Activated CD4-positive, alpha-beta T cell treated with anti-CD3 and anti-CD28 coated beads for 36 hours (primary cell): ENCODE measurements at regions of chr5 and their contacts with region 1.

Region 1: DNA sequence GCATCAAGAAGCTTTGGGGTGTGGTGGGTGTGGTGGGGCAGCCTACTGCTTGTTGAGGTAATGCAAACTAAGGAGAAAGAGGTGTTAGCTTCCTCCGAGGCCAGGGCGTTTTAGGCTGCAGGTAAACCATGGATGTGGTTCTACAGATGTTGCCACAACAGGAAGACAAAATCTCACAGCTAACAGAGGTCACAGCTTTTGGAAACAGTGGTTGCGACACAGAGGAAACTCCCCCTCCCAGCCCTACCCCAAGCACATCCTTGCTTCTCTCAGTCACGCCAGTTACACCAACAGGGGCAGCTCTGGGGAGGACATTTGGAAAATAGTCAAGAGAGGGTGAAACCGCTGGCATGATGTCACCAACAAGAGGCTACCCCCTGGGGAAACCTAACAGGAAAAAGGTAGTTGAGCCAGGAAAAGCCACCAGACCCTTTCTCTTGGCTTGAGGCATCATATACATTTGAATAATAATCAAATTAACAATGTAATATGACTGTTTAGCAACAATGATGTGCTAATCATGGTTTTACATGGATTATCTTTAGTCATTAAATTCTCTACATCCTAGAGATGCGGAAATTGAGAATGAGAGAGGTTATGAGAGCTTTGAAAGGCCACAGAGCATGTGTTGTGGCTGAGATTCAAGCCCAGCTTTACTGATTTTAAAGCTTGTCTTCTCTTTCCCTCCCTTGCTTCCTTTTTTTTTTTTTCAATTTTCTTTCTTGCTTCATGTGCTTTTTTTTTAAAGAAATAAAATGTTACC is 82.2 kb upstream of the IL12B start:
- DNase-seq: peak; percentile 75
- ATAC-seq: peak; percentile 82
- H3K4me3 Mint-ChIP-seq: no peak overlapping the region
- H3K27ac Mint-ChIP-seq: no peak overlapping the region
- H3K4me1 Mint-ChIP-seq: peaks cover 47% of the 10 kb centered on the region
- H3K27me3 Mint-ChIP-seq: peaks cover 6% of the 10 kb centered on the region

Region 2: DNA sequence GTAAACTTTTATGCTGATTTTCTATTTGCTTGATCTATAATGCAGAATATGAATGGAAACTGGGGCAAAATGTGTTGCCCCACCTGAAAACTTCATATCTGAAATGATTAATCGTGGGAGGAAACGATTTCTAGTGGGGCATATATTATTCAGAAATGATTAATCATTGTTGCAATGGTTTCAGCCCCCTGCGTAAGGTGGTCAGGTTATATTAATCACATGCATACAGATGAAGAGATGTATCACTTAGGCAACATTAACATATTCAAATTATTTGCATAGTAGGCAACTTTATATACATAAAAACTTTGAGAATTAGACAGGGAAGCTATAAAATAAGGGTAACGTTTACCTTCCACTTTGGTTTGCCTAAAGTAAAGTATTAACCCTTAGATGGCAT is 1619.2 kb before region 1 on chr5:
- CTCF ChIA-PET with region 1: no interaction called
- POLR2A ChIA-PET with region 1: interaction called, 15 read pairs
- intact Hi-C with region 1: no loop called
- DNase-seq: no peak
- ATAC-seq: peak; percentile 69
- H3K4me3 Mint-ChIP-seq: no peak overlapping the region
- H3K27ac Mint-ChIP-seq: no peak overlapping the region
- H3K4me1 Mint-ChIP-seq: peaks cover 9% of the 10 kb centered on the region
- H3K27me3 Mint-ChIP-seq: no peaks in the 10 kb centered on the region

Region 3: GRCh38 chr5:159163027-159163700 is 249.3 kb before region 1 on chr5:
- CTCF ChIA-PET with region 1: no interaction called
- POLR2A ChIA-PET with region 1: no interaction called
- intact Hi-C with region 1: loop called (anchors 5 to 10 kb)
- DNase-seq: peak; percentile 38
- ATAC-seq: peak; percentile 96
- H3K4me3 Mint-ChIP-seq: no peak overlapping the region
- H3K27ac Mint-ChIP-seq: peak overlapping the region; percentile 82
- H3K4me1 Mint-ChIP-seq: peaks cover 48% of the 10 kb centered on the region
- H3K27me3 Mint-ChIP-seq: no peaks in the 10 kb centered on the region

Region 4: DNA sequence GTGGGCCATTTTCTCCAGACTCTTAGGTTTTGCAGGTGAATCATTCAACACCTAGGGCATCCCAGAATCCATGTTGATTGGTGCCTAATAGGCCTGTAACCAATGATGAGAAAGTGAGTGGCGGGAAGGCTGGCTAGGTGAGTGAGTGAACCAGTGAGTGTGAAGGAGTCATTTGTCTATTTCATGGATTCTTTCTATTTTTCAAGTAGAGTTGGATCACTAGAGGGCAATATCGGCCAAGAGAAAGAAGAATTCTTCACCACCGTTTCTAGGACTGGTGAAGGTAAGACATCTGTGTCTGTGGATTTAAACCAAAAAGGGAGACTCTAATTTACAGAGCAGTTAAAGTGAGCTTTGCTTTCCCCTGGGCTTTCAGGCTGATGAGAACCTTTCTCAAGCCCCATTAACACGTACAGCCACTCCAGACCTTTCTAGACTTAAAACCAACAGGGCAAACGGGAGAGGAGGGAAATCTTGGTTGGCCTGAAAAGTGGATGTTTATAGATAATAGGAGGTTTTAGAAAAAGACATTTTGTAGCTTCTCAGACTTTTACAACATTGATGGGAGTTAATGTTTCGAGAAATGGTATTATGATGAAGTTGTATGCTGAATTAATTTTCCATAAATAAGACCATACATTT is 32.1 kb after region 1 on chr5:
- CTCF ChIA-PET with region 1: no interaction called
- POLR2A ChIA-PET with region 1: no interaction called
- intact Hi-C with region 1: no loop called
- DNase-seq: no peak
- ATAC-seq: peak; percentile 58
- H3K4me3 Mint-ChIP-seq: no peak overlapping the region
- H3K27ac Mint-ChIP-seq: no peak overlapping the region
- H3K4me1 Mint-ChIP-seq: no peaks in the 10 kb centered on the region
- H3K27me3 Mint-ChIP-seq: peaks cover 15% of the 10 kb centered on the region

Region 5: GRCh38 chr5:159475026-159475425 is 62.6 kb after region 1 on chr5:
- CTCF ChIA-PET with region 1: no interaction called
- POLR2A ChIA-PET with region 1: no interaction called
- intact Hi-C with region 1: no loop called
- DNase-seq: no peak
- ATAC-seq: no peak
- H3K4me3 Mint-ChIP-seq: no peak overlapping the region
- H3K27ac Mint-ChIP-seq: no peak overlapping the region
- H3K4me1 Mint-ChIP-seq: peaks cover 9% of the 10 kb centered on the region
- H3K27me3 Mint-ChIP-seq: peaks cover 6% of the 10 kb centered on the region

Region 6: GRCh38 chr5:159773062-159773924 is 360.8 kb after region 1 on chr5:
- CTCF ChIA-PET with region 1: no interaction called
- POLR2A ChIA-PET with region 1: no interaction called
- intact Hi-C with region 1: loop called in 1 of 2 experiments (anchors 2 kb)
- DNase-seq: peak; percentile 92
- ATAC-seq: peak; percentile 91
- H3K4me3 Mint-ChIP-seq: peak overlapping the region; percentile 30
- H3K27ac Mint-ChIP-seq: peak overlapping the region; percentile 37
- H3K4me1 Mint-ChIP-seq: peaks cover 17% of the 10 kb centered on the region
- H3K27me3 Mint-ChIP-seq: peaks cover 46% of the 10 kb centered on the region